ENCODE measurements at regions of chr18 and their contacts with region 1.

Region 1: GRCh38 chr18:76349067-76349715 is 145.9 kb downstream of the ZNF516 start:
- DNase-seq: peak; percentile 85
- H3K4me3 Mint-ChIP-seq: peak overlapping the region; percentile 63
- H3K27ac Mint-ChIP-seq: peak overlapping the region; percentile 42
- H3K4me1 Mint-ChIP-seq: peaks cover 21% of the 10 kb centered on the region
- H3K27me3 Mint-ChIP-seq: no peaks in the 10 kb centered on the region
- CTCF ChIP-seq: peak; percentile 83

Region 2: GRCh38 chr18:75727456-75727855 is 621.7 kb before region 1 on chr18:
- CTCF ChIA-PET with region 1: interaction called, 3 read pairs
- POLR2A ChIA-PET with region 1: no interaction called
- intact Hi-C with region 1: loop called (anchors 10 kb)
- DNase-seq: peak; percentile 69
- H3K4me3 Mint-ChIP-seq: no peak overlapping the region
- H3K27ac Mint-ChIP-seq: no peak overlapping the region
- H3K4me1 Mint-ChIP-seq: no peaks in the 10 kb centered on the region
- H3K27me3 Mint-ChIP-seq: no peaks in the 10 kb centered on the region
- CTCF ChIP-seq: peak; percentile 45

Region 3: GRCh38 chr18:76359909-76360308 is 10.7 kb after region 1 on chr18:
- CTCF ChIA-PET with region 1: no interaction called
- POLR2A ChIA-PET with region 1: no interaction called
- intact Hi-C with region 1: no loop called
- DNase-seq: no peak
- H3K4me3 Mint-ChIP-seq: no peak overlapping the region
- H3K27ac Mint-ChIP-seq: no peak overlapping the region
- H3K4me1 Mint-ChIP-seq: no peaks in the 10 kb centered on the region
- H3K27me3 Mint-ChIP-seq: no peaks in the 10 kb centered on the region
- CTCF ChIP-seq: no peak

Measured in MCF 10A (cell line).